ENCODE measurements at regions of chr15 and their contacts with region 1.

Region 1: DNA sequence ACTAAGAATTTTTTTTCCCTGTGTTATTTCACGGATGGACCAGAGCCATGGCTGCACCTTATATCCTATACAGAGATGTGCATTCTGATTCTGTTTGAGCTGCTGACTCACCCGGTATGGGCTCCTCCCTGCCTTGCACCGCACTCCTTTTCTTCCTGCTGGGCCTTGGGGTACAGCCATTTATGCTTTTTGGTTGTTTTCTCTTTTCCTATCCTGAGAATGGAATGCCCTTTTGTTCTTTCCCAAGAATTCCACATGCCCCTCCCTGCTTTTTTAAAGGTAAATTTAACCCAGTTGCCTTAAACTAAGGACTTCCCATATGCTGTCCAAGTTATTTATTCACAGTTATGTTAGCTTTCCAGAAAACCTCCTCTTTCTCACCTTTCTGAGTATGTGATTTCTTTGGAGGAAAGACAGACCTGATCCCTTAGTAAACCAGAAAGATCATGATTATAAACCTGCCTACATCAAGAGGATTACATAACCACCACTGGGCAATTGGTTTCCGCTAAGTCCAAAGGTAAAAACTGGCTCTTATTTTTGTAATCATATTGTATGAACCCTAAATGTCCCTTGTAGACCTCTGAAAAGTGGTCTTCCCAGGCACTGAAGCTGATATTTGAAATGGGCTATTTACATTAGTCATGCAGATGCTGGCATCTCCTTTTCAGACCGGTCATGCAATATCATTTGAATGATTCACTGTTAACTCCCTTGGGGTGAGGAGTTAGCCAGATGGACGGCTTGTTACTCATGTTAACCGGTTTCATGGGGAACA is 45.5 kb downstream of the TMOD3 start:
- DNase-seq: peak; percentile 85 to 98
- ATAC-seq: peak; percentile 93 to 94
- H3K4me3 ChIP-seq: peak overlapping the region; percentile 25
- H3K27ac ChIP-seq: peak overlapping the region; percentile 89 to 95
- H3K4me1 ChIP-seq: peaks cover 75% of the 10 kb centered on the region
- CTCF ChIP-seq: no peak
- EP300 ChIP-seq: peak; percentile 63 to 80; a peak in 4 of 5 replicates
- POLR2A ChIP-seq: no peak
- RAD21 ChIP-seq: peak; percentile 17 to 21; a peak in 2 of 5 replicates

Region 2: GRCh38 chr15:51888593-51889195 is 13.8 kb after region 1 on chr15:
- CTCF ChIA-PET with region 1: interaction called, 26 read pairs
- POLR2A ChIA-PET with region 1: interaction called, 4 read pairs
- DNase-seq: peak; percentile 46 to 51
- ATAC-seq: peak; percentile 60 to 69; a peak in 4 of 6 replicates
- H3K4me3 ChIP-seq: 0 out of 3 replicates have a peak overlapping the region, but pooled peaks have one; percentile 20
- H3K27ac ChIP-seq: peak overlapping the region; percentile 72 to 80
- H3K4me1 ChIP-seq: peaks cover 48% of the 10 kb centered on the region
- CTCF ChIP-seq: peak; percentile 85
- EP300 ChIP-seq: no peak
- POLR2A ChIP-seq: no peak
- RAD21 ChIP-seq: peak; percentile 61 to 68

Region 3: DNA sequence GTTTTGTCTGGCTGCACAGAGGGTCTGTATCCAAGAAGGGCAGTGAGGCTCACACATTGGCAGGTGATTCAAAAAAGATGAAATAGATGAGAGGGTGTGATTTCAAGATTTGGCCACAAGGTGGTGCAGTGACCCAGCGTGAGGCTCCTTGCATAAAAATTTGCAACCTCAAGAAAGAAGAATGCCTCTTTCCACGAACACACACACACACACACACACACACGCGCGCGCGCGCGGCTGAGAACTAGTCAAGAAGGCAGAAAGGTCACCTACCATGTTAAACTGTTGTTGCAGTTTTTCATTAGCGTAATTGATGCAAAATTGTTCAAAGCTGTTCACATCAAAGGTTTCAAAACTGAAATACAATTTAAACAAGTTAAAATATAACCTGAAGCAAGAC is 381.4 kb after region 1 on chr15:
- CTCF ChIA-PET with region 1: no interaction called
- POLR2A ChIA-PET with region 1: no interaction called
- DNase-seq: peak; percentile 80 to 86
- ATAC-seq: peak in 1 of 2 experiments; percentile 37; a peak in 4 of 6 replicates
- H3K4me3 ChIP-seq: no peak overlapping the region
- H3K27ac ChIP-seq: no peak overlapping the region; a peak in 1 of 6 replicates
- H3K4me1 ChIP-seq: peaks cover 50% of the 10 kb centered on the region
- CTCF ChIP-seq: peak; percentile 96
- EP300 ChIP-seq: no peak
- POLR2A ChIP-seq: no peak
- RAD21 ChIP-seq: peak; percentile 97 to 99